Activated CD4-positive, alpha-beta T cell treated with anti-CD3 and anti-CD28 coated beads, Interleukin-2, amount 10 ng/mL, durations not matched to agents 24 days and 14 days (primary cell): ENCODE measurements at regions of chr9 and their contacts with region 1.

Region 1: GRCh38 chr9:88007206-88007631 is 32.9 kb upstream of the CDK20 start:
- DNase-seq: peak; percentile 79
- H3K4me3 Mint-ChIP-seq: no peak overlapping the region
- H3K27ac Mint-ChIP-seq: peak overlapping the region; percentile 10
- H3K4me1 Mint-ChIP-seq: peaks cover 5% of the 10 kb centered on the region
- H3K27me3 Mint-ChIP-seq: peaks cover 13% of the 10 kb centered on the region

Region 2: GRCh38 chr9:87973730-87974292 is 33.4 kb before region 1 on chr9:
- intact Hi-C with region 1: loop called (anchors 1 kb)
- DNase-seq: no peak
- H3K4me3 Mint-ChIP-seq: peak overlapping the region; percentile 95
- H3K27ac Mint-ChIP-seq: peak overlapping the region; percentile 92
- H3K4me1 Mint-ChIP-seq: peaks cover 12% of the 10 kb centered on the region
- H3K27me3 Mint-ChIP-seq: peaks cover 8% of the 10 kb centered on the region

Region 3: DNA sequence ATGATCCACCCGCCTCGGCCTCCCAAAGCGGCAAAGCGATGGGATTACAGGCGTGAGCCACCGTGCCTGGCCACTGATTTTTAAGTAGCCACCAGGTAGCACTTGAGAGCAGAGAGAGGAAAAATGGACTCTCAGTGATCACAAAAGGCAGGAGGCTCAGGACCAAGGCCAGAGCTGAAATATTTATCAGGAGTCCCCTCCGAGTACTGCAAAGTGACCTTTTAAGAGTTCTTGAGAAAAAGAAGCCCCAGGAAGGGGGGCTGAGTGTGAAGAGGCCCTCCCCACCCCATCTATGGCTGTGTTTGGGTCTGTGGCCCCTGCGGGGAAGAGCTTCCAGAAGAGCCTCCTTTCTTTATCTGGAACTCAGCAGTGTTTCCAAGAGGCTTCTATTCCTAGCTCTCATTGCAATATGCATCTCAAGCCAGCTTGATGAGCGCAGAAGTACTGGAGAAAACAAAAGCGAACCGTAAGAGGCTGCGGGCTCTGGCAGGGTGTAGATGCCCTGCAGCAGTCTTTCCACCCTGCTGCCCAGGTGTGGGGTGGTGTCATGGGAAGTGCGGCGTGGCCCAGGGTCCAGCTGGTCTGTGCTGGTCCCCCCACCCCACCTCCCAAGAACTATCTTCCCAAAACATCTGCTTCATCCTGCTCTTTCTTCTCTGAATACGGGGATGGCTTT is 42.6 kb after region 1 on chr9:
- intact Hi-C with region 1: loop called (anchors 1 kb)
- DNase-seq: no peak
- H3K4me3 Mint-ChIP-seq: no peak overlapping the region
- H3K27ac Mint-ChIP-seq: no peak overlapping the region
- H3K4me1 Mint-ChIP-seq: peaks cover 7% of the 10 kb centered on the region
- H3K27me3 Mint-ChIP-seq: peaks cover 6% of the 10 kb centered on the region

Region 4: GRCh38 chr9:88072851-88073365 is 65.7 kb after region 1 on chr9:
- intact Hi-C with region 1: no loop called
- DNase-seq: no peak
- H3K4me3 Mint-ChIP-seq: no peak overlapping the region
- H3K27ac Mint-ChIP-seq: no peak overlapping the region
- H3K4me1 Mint-ChIP-seq: peaks cover 13% of the 10 kb centered on the region
- H3K27me3 Mint-ChIP-seq: peaks cover 72% of the 10 kb centered on the region

Region 5: DNA sequence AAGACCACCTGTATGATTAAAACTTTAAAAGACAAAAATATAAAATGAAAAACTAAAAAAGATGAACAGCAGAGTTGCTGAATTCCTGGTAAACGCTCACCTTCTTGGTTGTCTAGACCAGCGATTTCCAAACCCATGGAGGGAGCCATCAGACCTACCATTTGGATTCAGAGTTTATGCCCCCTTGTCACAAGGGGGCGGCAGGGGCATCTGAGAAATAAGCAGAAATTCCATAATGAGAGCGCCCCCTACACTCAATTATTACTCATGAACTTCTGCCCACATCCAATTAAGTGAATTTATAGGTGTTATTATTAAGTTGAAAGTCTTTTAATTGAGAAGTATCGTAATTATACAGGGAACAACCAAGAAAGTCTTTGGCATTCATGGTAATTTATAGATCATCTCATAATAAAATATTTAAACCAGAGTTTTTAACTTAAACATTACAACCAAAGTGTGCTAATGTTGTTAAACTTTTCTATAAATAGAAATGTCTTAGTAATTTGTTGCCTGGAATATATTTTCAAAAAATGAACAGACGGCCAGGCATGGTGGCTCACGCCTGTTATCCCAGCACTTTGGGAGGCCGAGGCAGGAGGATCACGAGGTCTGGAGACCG is 166.3 kb after region 1 on chr9:
- intact Hi-C with region 1: no loop called
- DNase-seq: peak; percentile 82
- H3K4me3 Mint-ChIP-seq: no peak overlapping the region
- H3K27ac Mint-ChIP-seq: no peak overlapping the region
- H3K4me1 Mint-ChIP-seq: peaks cover 5% of the 10 kb centered on the region
- H3K27me3 Mint-ChIP-seq: peaks cover 33% of the 10 kb centered on the region

Region 6: DNA sequence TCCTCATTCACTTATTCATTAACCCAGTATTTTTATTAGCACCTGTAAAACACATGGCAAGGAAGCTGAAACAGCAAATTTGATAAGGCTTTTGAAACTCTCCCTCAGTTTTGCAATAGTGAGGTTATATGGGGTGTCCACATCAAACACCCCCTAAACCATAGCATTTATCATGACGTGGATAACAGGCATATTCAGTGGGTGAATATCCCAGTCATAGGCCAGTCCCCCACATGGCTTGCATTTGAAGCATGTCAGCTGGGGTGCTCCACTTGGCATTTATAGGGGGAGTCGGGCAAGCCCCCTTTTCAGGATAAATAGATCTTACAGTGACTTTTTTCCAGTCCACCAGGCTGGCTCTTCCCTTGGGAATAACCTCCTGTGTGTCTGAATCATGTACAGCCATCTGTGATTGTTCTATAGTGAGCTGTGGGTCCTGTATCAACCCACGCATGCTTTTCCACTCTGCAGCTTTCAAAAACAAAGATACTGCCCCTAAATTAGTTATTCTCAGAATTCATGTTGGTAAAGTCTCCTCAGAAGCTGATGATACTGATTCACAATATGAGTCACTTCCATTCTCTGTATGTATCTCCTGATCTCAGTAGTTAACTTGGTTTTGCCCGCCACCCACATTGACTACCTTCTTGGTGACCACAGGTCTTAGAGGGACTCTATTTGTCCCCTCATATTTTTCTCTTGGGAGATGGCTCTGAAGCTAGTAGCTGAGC is 296.7 kb after region 1 on chr9:
- intact Hi-C with region 1: loop called (anchors 2 kb)
- DNase-seq: peak; percentile 89
- H3K4me3 Mint-ChIP-seq: peak overlapping the region; percentile 62
- H3K27ac Mint-ChIP-seq: peak overlapping the region; percentile 92
- H3K4me1 Mint-ChIP-seq: peaks cover 53% of the 10 kb centered on the region
- H3K27me3 Mint-ChIP-seq: no peaks in the 10 kb centered on the region

Region 7: DNA sequence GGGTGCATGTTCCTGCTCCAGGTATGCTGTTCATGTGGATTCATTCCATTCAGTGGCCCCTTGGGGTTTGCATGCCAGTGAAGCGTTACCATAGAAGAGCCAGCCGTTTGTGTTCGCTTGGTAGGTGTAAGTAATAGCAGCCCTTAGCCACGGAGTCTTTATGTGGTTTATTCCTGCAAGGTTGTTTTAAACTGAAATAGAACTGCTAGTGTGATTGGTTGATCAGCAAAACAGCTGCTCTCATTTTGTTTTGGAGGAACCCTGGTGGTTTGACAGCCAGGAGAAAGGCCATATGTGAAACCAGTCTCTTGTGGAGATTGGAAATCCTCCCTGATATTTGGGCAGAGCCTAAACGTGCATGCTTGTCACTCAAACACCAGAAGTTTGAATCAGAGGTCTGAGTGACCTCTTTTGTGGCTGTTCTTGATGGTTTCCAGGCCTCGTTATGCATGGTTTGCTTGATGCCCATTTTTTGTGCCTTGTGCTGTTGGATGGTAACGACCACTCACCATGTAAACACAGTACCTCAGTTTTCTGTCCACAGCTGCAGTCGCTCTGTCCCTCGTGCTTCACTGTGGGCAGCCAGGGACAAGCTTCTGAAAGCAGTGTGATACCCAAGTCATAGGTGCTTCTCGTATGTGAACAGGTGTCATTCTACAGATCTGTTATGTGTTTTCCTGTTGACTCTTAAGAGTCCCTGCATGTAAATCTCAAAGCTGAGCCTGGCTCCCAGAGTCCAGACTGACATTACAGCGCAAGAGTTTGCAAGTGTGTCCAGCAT is 469.5 kb after region 1 on chr9:
- intact Hi-C with region 1: loop called (anchors 10 kb)
- DNase-seq: peak; percentile 58
- H3K4me3 Mint-ChIP-seq: no peak overlapping the region
- H3K27ac Mint-ChIP-seq: peak overlapping the region; percentile 79
- H3K4me1 Mint-ChIP-seq: peaks cover 15% of the 10 kb centered on the region
- H3K27me3 Mint-ChIP-seq: no peaks in the 10 kb centered on the region